Activated CD8-positive, alpha-beta memory T cell treated with anti-CD3 and anti-CD28 coated beads, Interleukin-2, amount 10 ng/mL, durations not matched to agents 7 days and 5 days (primary cell): ENCODE measurements at regions of chr2 and their contacts with region 1.

Region 1: DNA sequence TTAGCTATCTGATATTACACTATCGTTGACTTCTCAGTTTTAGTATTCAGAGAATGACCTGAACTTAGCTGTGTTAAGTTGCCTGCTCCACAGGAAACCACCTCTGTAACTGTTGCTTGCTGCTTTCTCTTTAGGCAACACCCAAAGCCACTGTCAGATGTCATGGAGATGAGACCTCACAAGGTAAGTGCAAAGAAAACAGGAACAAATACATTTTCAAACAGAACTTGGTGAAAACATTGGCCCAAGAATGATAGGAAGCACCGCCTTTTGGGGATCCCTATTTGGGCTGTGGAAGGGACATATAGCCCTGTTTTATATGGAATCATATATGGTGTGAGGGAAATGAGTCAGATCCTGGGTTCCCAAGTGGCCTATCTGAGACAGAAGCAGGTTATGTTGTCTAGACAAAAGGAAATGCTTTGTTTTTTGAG is 143.4 kb downstream of the UBE2E3 start:
- DNase-seq: peak; percentile 89
- ATAC-seq: peak; percentile 88
- H3K4me3 Mint-ChIP-seq: peak overlapping the region; percentile 73
- H3K27ac Mint-ChIP-seq: peak overlapping the region; percentile 92
- H3K4me1 Mint-ChIP-seq: peaks cover 72% of the 10 kb centered on the region
- H3K27me3 Mint-ChIP-seq: no peaks in the 10 kb centered on the region

Region 2: DNA sequence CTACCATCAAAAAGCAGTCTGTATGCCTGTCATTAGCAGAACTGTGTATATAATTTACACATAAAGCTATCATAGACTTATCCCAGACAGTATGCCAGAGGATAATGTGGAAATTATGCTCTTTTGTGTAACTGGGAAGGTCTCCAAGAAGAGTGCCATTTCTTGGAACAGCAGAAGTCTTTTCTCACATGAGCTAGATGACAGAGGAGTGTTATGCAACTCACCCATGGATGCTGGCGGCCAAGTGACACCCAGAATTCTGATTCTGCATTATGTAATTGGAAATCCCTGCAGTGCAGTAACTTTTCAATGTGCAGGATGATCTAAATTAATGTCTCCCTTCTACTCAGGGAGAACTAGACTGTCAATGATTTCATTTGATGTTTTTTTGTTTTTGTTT is 16.6 kb after region 1 on chr2:
- CTCF ChIA-PET with region 1: interaction called, 118 read pairs
- DNase-seq: no peak
- ATAC-seq: no peak
- H3K4me3 Mint-ChIP-seq: peak overlapping the region; percentile 70
- H3K27ac Mint-ChIP-seq: peak overlapping the region; percentile 91
- H3K4me1 Mint-ChIP-seq: peaks cover 85% of the 10 kb centered on the region
- H3K27me3 Mint-ChIP-seq: no peaks in the 10 kb centered on the region

Region 3: GRCh38 chr2:181466661-181467576 is 343.1 kb after region 1 on chr2:
- CTCF ChIA-PET with region 1: interaction called, 11 read pairs
- DNase-seq: peak; percentile 90
- ATAC-seq: peak; percentile 24
- H3K4me3 Mint-ChIP-seq: peak overlapping the region; percentile 29
- H3K27ac Mint-ChIP-seq: peak overlapping the region; percentile 58
- H3K4me1 Mint-ChIP-seq: peaks cover 90% of the 10 kb centered on the region
- H3K27me3 Mint-ChIP-seq: no peaks in the 10 kb centered on the region